SK-N-SH (cell line): ENCODE measurements at regions of chr9 and their contacts with region 1.

Region 1: GRCh38 chr9:38160613-38161215 is 91.7 kb upstream of the SHB start:
- DNase-seq: peak; percentile 52
- H3K4me3 ChIP-seq: peak overlapping the region in 1 of 2 experiments; percentile 21; a peak in 1 of 4 replicates
- H3K27ac ChIP-seq: no peak overlapping the region
- H3K4me1 ChIP-seq: peaks cover 0 to 13% of the 10 kb centered on the region in 2 experiments; a peak in 1 of 4 replicates
- H3K27me3 ChIP-seq: no peaks in the 10 kb centered on the region; the same call in 1 of the 2 replicates
- CTCF ChIP-seq: peak; percentile 90
- EP300 ChIP-seq: no peak
- RAD21 ChIP-seq: peak; percentile 66

Region 2: DNA sequence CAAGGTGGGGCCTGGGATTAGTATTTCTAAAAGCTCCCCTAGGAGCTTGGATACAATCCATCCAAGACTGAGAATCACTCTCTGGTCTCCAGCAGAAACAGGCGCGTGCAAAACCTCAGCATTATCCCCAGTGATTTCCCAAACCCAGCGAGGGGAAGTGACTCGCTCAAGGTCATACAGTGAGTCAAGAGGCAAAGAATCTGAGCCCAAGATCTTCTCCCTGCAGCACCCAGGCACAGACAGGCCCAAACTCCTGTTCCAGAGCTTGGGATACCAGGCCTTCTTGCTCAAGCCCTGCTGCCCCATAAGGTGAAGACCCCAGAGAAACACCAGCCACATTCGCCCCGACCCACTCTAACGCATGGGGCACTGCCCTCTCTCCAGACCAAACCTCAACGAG is 124.8 kb before region 1 on chr9:
- CTCF ChIA-PET with region 1: no interaction called
- POLR2A ChIA-PET with region 1: no interaction called
- DNase-seq: no peak
- H3K4me3 ChIP-seq: no peak overlapping the region
- H3K27ac ChIP-seq: peak overlapping the region in 1 of 2 experiments; percentile 97; a peak in 2 of 4 replicates
- H3K4me1 ChIP-seq: peaks cover 49 to 66% of the 10 kb centered on the region in 2 experiments
- H3K27me3 ChIP-seq: no peaks in the 10 kb centered on the region
- CTCF ChIP-seq: no peak
- EP300 ChIP-seq: peak in 1 of 2 experiments; percentile 82; a peak in 1 of 4 replicates
- RAD21 ChIP-seq: no peak

Region 3: DNA sequence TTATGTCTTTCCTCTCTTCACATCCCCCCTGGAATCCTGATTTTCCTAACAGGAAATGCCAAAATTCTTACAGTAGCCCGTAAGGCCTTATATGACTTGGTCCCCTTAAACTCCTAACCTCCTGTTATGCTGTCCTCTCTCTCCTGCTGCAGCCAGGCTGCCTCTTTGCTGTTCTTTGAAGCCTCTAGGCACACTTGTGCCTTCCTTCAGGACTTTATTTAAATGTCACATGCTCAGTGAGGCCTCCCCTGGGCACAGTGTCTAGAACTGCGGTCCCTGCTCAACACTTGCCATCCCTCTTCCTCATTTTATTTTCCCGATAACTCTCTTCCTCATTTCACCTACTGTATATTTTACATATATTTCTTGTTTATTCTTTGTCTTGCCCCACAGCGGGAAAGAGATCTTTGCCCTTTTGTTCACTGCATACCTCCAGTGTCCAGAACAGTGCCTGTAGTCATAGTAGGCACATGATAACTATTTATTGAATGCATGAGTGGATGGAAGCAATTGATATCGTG is 86.2 kb before region 1 on chr9:
- CTCF ChIA-PET with region 1: no interaction called
- POLR2A ChIA-PET with region 1: no interaction called
- DNase-seq: no peak
- H3K4me3 ChIP-seq: no peak overlapping the region
- H3K27ac ChIP-seq: peak overlapping the region in 1 of 2 experiments; percentile 5; a peak in 1 of 4 replicates
- H3K4me1 ChIP-seq: peaks cover 20 to 22% of the 10 kb centered on the region in 2 experiments
- H3K27me3 ChIP-seq: no peaks in the 10 kb centered on the region
- CTCF ChIP-seq: no peak
- EP300 ChIP-seq: no peak
- RAD21 ChIP-seq: no peak

Region 4: DNA sequence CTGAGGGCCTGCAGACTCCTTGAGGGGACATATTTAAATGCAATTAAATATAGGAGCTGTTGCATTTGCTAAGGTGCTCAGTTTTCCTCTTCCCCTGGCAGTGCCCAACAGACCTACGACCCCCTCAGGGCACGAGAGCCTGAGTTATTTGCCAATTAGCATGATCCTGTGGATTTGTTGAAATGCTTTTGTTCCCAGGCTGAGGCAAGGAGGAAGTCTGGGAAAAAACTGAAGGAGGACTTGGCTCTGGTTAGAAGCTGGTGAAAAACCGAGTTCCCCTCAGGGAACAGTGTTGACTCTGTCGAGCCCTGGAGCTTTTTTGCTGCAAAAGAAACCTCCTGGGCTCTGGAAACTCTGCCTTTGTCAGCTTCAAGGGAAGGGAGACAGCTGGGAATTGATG is 11.9 kb after region 1 on chr9:
- CTCF ChIA-PET with region 1: interaction called, 19 read pairs
- POLR2A ChIA-PET with region 1: interaction called, 3 read pairs
- DNase-seq: peak; percentile 32
- H3K4me3 ChIP-seq: no peak overlapping the region
- H3K27ac ChIP-seq: peak overlapping the region in 1 of 2 experiments; percentile 11; a peak in 2 of 4 replicates
- H3K4me1 ChIP-seq: peaks cover 0 to 7% of the 10 kb centered on the region in 2 experiments; a peak in 1 of 4 replicates
- H3K27me3 ChIP-seq: no peaks in the 10 kb centered on the region
- CTCF ChIP-seq: no peak
- EP300 ChIP-seq: no peak
- RAD21 ChIP-seq: no peak

Region 5: DNA sequence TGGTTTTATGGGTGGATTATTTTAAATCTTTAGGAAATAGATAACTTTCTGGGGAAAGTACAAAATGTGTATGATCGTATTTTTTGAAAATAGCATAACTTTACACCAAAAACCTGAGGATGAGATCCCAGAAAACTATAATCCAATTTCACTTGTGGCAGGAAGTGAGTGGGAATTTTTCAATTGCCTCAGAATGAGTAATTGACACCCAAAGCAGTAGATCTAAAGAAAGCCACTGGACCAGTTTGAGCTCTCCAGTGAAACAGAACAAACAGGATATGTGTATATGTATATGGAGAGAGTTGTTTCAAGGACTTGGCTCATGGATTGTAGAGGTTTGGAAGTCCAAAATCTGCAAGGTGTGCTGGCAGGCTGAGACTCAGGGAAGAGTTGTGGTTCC is 17.5 kb after region 1 on chr9:
- CTCF ChIA-PET with region 1: interaction called, 19 read pairs
- POLR2A ChIA-PET with region 1: no interaction called
- DNase-seq: no peak
- H3K4me3 ChIP-seq: no peak overlapping the region
- H3K27ac ChIP-seq: no peak overlapping the region
- H3K4me1 ChIP-seq: no peaks in the 10 kb centered on the region; a peak in 1 of 4 replicates
- H3K27me3 ChIP-seq: no peaks in the 10 kb centered on the region; the same call in 1 of the 2 replicates
- CTCF ChIP-seq: no peak
- EP300 ChIP-seq: no peak
- RAD21 ChIP-seq: no peak

Region 6: GRCh38 chr9:38183994-38184568 is 23.4 kb after region 1 on chr9:
- CTCF ChIA-PET with region 1: interaction called, 11 read pairs
- POLR2A ChIA-PET with region 1: no interaction called
- DNase-seq: no peak
- H3K4me3 ChIP-seq: no peak overlapping the region
- H3K27ac ChIP-seq: no peak overlapping the region
- H3K4me1 ChIP-seq: peaks cover 0 to 2% of the 10 kb centered on the region in 2 experiments; a peak in 1 of 4 replicates
- H3K27me3 ChIP-seq: no peaks in the 10 kb centered on the region; the same call in 1 of the 2 replicates
- CTCF ChIP-seq: no peak
- EP300 ChIP-seq: no peak
- RAD21 ChIP-seq: no peak